Psoas muscle (tissue), 8 donors: ENCODE measurements at regions of chr6 and their contacts with region 1.

Region 1: DNA sequence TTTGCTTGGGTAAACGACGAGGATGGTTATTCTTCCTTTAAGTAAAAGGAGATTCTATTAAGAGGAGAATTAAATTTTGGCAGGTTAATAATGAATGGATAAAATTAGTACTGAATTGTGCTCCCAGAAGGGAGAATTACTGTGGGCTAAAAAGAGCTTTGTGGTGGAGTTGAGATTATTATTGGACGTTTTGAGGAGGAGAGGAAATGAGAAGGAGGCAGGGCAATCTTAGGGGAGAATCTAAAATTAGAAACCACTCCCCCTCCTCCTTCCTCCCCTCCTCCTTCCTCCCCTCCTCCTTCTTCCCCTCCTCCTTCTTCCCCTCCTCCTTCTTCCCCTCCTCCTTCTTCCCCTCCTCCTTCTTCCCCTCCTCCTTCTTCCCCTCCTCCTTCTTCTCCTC is 331.8 kb downstream of the PRL start:
- DNase-seq: no peak
- ATAC-seq: no peak
- H3K4me3 ChIP-seq: no peak overlapping the region
- H3K27ac ChIP-seq: no peak overlapping the region
- H3K4me1 ChIP-seq: no peaks in the 10 kb centered on the region
- H3K27me3 ChIP-seq: no peaks in the 10 kb centered on the region
- CTCF ChIP-seq: no peak

Region 2: DNA sequence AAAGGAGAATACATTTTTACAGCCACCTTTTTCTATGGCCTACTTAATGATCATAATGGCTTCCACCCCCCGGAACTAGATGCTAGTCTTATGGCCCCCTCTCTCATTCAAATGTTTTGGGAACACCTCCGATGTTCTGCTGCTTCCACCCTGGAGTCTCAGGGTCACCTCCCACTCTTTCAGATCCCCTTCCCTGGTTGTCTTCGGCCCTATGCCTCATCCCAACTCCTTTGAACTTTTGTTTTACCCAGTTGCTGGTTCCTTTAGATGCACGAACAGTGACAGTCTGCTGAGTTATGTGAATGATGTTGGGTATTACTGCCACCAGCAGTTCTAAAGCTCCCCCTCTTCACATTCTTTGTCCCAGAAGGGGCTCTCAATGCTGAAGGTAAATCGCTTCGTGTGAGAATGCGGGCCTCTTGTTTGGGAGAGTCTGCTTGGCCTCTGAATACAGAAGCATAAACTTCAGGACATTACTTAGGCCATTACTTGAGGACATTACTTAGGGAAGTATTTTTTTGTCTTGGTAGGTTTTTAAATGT is 62.3 kb before region 1 on chr6:
- intact Hi-C with region 1: loop called in 1 of 2 experiments (anchors 2 kb)
- DNase-seq: no peak
- ATAC-seq: no peak
- H3K4me3 ChIP-seq: no peak overlapping the region
- H3K27ac ChIP-seq: no peak overlapping the region
- H3K4me1 ChIP-seq: no peaks in the 10 kb centered on the region
- H3K27me3 ChIP-seq: no peaks in the 10 kb centered on the region
- CTCF ChIP-seq: no peak